MCF 10A (cell line): ENCODE measurements at regions of chr3 and their contacts with region 1.

Region 1: GRCh38 chr3:50192689-50193141 is 1.3 kb downstream of the GNAT1 start:
- DNase-seq: peak; percentile 68
- H3K4me3 Mint-ChIP-seq: no peak overlapping the region
- H3K27ac Mint-ChIP-seq: no peak overlapping the region
- H3K4me1 Mint-ChIP-seq: no peaks in the 10 kb centered on the region
- H3K27me3 Mint-ChIP-seq: no peaks in the 10 kb centered on the region
- CTCF ChIP-seq: peak; percentile 85

Region 2: DNA sequence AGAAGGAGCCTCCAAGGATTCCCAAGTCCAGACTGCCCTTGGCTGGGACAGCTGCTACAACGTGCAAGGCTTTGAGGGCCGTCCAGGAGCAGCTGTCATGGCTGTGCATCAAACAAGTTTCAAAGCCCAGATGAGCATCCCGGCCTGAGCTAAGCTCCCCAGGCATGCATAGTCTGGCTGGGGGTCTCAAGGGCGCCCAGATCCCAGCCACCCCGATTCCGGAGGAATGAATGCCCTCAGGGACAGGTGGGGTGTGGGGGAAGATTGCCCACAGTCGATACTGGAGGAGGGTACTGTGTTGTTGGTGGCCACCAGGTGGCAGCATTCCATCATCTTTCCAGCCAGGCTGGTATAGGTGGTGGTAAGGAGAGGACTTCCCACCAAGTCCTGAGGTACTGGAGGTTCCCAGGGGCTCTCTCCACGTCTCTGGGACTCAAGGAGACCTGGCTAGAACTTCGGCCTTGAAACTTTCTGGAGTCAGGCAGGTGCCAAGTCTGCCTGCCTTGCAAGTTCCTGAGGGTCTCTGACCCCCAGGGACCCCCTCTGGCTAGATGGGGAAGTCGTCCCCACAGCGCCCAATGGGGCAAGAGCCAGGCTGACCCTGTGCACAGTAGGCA is 71.2 kb before region 1 on chr3:
- CTCF ChIA-PET with region 1: interaction called, 245 read pairs
- POLR2A ChIA-PET with region 1: interaction called, 48 read pairs
- intact Hi-C with region 1: loop called (anchors 1 kb)
- DNase-seq: peak; percentile 84
- H3K4me3 Mint-ChIP-seq: no peak overlapping the region
- H3K27ac Mint-ChIP-seq: no peak overlapping the region
- H3K4me1 Mint-ChIP-seq: peaks cover 13% of the 10 kb centered on the region
- H3K27me3 Mint-ChIP-seq: no peaks in the 10 kb centered on the region
- CTCF ChIP-seq: peak; percentile 80

Region 3: GRCh38 chr3:50163572-50164455 is 28.9 kb before region 1 on chr3:
- CTCF ChIA-PET with region 1: interaction called, 13 read pairs
- POLR2A ChIA-PET with region 1: interaction called, 4 read pairs
- intact Hi-C with region 1: no loop called
- DNase-seq: peak; percentile 98
- H3K4me3 Mint-ChIP-seq: peak overlapping the region; percentile 57
- H3K27ac Mint-ChIP-seq: peak overlapping the region; percentile 66
- H3K4me1 Mint-ChIP-seq: peaks cover 85% of the 10 kb centered on the region
- H3K27me3 Mint-ChIP-seq: no peaks in the 10 kb centered on the region
- CTCF ChIP-seq: no peak

Region 4: GRCh38 chr3:50205414-50206276 is 12.9 kb after region 1 on chr3:
- CTCF ChIA-PET with region 1: interaction called, 36 read pairs
- POLR2A ChIA-PET with region 1: interaction called, 3 read pairs
- intact Hi-C with region 1: no loop called
- DNase-seq: no peak
- H3K4me3 Mint-ChIP-seq: no peak overlapping the region
- H3K27ac Mint-ChIP-seq: no peak overlapping the region
- H3K4me1 Mint-ChIP-seq: no peaks in the 10 kb centered on the region
- H3K27me3 Mint-ChIP-seq: no peaks in the 10 kb centered on the region
- CTCF ChIP-seq: no peak

Region 5: DNA sequence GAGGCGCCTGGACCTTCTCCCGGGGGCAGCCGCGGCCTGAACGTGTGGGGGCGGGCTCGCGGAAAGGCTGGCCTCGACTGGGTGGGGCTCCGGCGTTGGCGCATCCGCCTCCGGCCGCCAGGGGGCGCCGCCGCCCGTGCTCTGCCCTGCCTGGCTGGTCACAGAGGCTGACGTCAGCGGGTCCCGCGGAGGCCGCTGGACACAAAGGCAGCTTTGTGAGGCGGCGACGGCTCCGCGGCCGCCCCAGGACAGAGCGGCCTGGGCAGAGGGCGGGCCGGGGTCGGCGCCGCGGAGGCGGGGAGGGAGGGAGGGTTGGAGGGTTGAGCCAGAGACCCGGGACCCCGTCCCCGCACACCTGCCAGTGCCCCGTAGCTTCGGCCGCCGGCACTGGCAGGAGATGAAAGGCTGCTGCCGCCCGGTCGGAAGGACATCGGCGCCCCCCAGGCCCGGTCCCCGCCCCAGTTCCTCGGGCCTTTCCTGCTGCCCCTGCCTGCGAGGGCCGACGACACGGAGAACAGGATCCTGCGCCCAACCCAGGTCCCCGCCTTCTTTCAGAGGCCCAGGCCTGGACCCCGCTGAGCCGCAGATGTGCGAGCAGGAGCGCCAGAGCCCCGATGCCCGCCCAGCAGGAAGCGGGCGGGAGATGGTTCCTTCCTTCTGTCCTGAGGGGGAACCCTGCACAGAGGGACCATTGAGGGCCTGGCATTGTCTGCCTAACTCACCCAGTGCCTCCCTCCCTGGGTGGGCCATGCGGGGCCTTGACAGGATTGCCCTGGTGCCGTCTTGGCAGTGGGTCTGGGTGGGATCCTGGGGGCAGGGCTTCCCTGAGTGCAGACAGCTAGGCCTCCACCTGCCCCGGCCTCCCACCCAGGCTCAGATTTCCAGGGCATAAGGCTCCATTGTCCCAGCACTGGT is 67.6 kb after region 1 on chr3:
- CTCF ChIA-PET with region 1: interaction called, 11 read pairs
- POLR2A ChIA-PET with region 1: no interaction called
- intact Hi-C with region 1: no loop called
- DNase-seq: peak; percentile 85
- H3K4me3 Mint-ChIP-seq: peak overlapping the region; percentile 62
- H3K27ac Mint-ChIP-seq: peak overlapping the region; percentile 63
- H3K4me1 Mint-ChIP-seq: no peaks in the 10 kb centered on the region
- H3K27me3 Mint-ChIP-seq: no peaks in the 10 kb centered on the region
- CTCF ChIP-seq: peak; percentile 98

Region 6: DNA sequence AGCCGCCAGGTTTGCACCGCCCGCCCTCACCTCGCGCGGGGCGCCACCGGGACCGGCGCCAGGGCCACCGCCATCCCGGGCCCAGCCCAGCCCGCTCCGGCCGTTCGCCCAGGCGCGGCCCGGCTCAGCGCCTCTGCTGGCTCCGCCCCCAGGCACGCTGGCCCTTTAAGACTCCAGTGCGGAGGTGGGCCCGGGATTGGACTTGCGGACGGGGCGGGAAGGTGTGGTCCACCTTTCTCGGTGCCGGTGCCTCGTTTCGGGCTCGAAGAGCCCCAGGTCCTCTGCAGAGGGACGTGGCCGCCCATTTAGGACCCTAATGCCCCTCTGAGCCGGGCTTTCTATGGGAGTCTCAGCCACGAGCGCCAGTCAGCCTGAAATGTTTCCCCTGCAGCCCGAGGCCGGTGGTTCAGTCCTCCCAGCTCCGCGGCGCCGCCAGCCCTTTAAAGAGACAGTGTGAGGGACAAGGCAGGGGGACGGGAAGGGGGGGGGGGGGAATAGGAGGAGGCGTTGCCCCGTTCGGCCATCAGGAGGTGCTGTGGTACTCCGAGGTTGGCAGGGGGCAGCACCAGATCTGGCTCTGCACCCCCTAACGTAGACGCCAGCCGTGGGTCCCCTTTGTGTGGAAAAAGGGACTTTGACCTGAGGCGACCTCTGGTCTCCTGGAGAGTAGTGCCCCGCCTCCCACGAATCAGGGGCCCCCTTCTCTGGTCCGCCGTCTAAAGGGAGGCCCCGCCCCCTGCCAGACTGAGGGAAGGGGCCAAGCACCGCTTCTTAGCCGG is 128.8 kb after region 1 on chr3:
- CTCF ChIA-PET with region 1: interaction called, 3 read pairs
- POLR2A ChIA-PET with region 1: no interaction called
- intact Hi-C with region 1: loop called (anchors 1 kb)
- DNase-seq: peak; percentile 89
- H3K4me3 Mint-ChIP-seq: peak overlapping the region; percentile 80
- H3K27ac Mint-ChIP-seq: peak overlapping the region; percentile 98
- H3K4me1 Mint-ChIP-seq: peaks cover 17% of the 10 kb centered on the region
- H3K27me3 Mint-ChIP-seq: no peaks in the 10 kb centered on the region
- CTCF ChIP-seq: peak; percentile 38

Region 7: GRCh38 chr3:50405249-50405648 is 212.5 kb after region 1 on chr3:
- CTCF ChIA-PET with region 1: no interaction called
- POLR2A ChIA-PET with region 1: no interaction called
- intact Hi-C with region 1: no loop called
- DNase-seq: peak; percentile 56
- H3K4me3 Mint-ChIP-seq: no peak overlapping the region
- H3K27ac Mint-ChIP-seq: no peak overlapping the region
- H3K4me1 Mint-ChIP-seq: peaks cover 5% of the 10 kb centered on the region
- H3K27me3 Mint-ChIP-seq: peaks cover 12% of the 10 kb centered on the region
- CTCF ChIP-seq: no peak